Activated T-helper 1 cell treated with anti-CD3 and anti-CD28 coated beads, Interleukin-12 subunit alpha, Interleukin-12 subunit beta, Interleukin-2, Interleukin-4 antibody, amounts not matched to agents 30 ng/mL and 10 ng/mL and 1 ng/mL, durations not matched to agents 14 hours and 24 hours and 36 hours (primary cell): ENCODE measurements at regions of chr5 and their contacts with region 1.

Region 1: DNA sequence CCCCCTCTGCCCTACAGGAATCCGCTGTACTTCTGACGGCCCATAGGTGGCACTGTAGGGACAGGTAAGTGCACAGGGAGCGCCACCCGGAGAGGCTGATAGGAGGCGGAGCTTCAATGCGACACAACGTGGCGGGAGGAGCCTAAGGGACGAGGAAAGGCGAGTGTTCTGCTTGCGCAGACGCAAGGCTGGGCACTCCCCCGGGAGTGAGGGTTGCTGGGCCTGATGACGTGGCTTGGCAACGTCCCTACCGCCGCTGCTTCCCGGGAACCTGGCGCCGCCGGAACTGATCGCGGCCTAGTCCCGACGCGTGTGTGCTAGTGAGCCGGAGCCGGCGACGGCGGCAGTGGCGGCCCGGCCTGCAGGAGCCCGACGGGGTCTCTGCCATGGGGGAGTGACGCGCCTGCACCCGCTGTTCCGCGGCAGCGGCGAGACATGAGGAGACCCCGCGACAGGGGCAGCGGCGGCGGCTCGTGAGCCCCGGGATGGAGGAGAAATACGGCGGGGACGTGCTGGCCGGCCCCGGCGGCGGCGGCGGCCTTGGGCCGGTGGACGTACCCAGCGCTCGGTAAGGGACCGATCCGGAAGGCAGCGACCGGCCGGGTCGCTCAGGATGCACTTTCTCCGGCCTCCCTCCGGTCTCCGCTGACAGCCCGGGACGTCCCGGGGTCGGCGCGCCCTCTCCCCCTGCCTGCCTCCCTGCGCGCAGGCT is at the start of gene SLC30A5:
- DNase-seq: peak; percentile 99
- H3K4me3 Mint-ChIP-seq: peak within 1 kb of the TSS; percentile 97
- H3K27ac Mint-ChIP-seq: peak within 1 kb of the TSS; percentile 94
- H3K4me1 Mint-ChIP-seq: peaks cover 44% of the 10 kb centered on the region
- H3K27me3 Mint-ChIP-seq: no peaks in the 10 kb centered on the region
- total RNA-seq, gene SLC30A5: 60.8 and 67.4 TPM in 2 replicates

Region 2: GRCh38 chr5:69042915-69043658 is 50.8 kb before region 1 on chr5:
- intact Hi-C with region 1: loop called (anchors 1 kb)
- DNase-seq: peak; percentile 75
- H3K4me3 Mint-ChIP-seq: peak overlapping the region; percentile 84
- H3K27ac Mint-ChIP-seq: peak overlapping the region; percentile 56
- H3K4me1 Mint-ChIP-seq: peaks cover 5% of the 10 kb centered on the region
- H3K27me3 Mint-ChIP-seq: peaks cover 3% of the 10 kb centered on the region

Region 3: GRCh38 chr5:69189162-69190086 is 95.5 kb after region 1 on chr5 and contains the start of gene CENPH:
- intact Hi-C with region 1: loop called (anchors 1 kb)
- DNase-seq: peak; percentile 92
- H3K4me3 Mint-ChIP-seq: peak within 1 kb of the TSS; percentile 94
- H3K27ac Mint-ChIP-seq: peak within 1 kb of the TSS; percentile 98
- H3K4me1 Mint-ChIP-seq: peaks cover 16% of the 10 kb centered on the region
- H3K27me3 Mint-ChIP-seq: no peaks in the 10 kb centered on the region
- total RNA-seq, gene CENPH: 32.3 and 35.5 TPM in 2 replicates

Region 4: DNA sequence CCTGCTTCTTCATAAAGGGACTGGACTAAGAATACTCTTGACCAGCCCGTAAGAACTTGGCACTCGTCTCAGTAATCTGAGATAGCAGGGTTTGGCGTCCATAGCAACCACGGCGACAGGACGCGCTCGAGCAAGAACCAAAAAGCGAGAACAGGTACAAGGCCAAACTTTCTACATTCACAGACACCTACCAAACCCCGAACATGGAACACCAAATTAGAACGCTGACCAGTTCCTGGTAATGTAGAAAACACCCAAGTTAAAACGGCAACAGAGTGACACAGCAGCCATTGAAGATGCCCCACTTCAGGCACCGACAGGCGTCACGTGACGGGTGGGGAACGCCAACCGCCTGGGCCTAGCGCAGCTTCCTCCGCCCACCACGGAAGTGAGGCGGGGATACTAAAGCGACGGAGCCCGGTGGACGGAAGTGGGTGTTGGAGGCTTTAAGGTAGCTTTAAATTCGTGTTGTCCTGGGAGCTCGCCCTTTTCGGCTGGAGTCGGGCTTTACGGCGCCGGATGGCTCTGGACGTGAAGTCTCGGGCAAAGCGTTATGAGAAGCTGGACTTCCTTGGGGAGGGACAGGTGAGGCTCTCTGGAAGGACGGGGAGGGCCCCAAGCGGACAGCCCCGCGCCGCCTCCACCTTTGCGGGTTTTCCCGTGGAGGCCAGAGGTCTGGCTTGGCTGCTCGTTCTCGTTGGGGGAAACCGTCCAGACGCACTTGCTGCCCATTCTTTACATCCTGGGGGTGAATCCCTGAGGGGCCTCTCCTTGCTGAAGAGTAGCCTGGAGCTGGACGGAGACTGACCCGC is 140.7 kb after region 1 on chr5 and contains the start of gene CDK7:
- intact Hi-C with region 1: loop called (anchors 1 kb)
- DNase-seq: peak; percentile 92
- H3K4me3 Mint-ChIP-seq: peak within 1 kb of the TSS; percentile 97
- H3K27ac Mint-ChIP-seq: peak within 1 kb of the TSS; percentile 84
- H3K4me1 Mint-ChIP-seq: peaks cover 43% of the 10 kb centered on the region
- H3K27me3 Mint-ChIP-seq: no peaks in the 10 kb centered on the region
- total RNA-seq, gene CDK7: 42.4 and 49.2 TPM in 2 replicates

Region 5: DNA sequence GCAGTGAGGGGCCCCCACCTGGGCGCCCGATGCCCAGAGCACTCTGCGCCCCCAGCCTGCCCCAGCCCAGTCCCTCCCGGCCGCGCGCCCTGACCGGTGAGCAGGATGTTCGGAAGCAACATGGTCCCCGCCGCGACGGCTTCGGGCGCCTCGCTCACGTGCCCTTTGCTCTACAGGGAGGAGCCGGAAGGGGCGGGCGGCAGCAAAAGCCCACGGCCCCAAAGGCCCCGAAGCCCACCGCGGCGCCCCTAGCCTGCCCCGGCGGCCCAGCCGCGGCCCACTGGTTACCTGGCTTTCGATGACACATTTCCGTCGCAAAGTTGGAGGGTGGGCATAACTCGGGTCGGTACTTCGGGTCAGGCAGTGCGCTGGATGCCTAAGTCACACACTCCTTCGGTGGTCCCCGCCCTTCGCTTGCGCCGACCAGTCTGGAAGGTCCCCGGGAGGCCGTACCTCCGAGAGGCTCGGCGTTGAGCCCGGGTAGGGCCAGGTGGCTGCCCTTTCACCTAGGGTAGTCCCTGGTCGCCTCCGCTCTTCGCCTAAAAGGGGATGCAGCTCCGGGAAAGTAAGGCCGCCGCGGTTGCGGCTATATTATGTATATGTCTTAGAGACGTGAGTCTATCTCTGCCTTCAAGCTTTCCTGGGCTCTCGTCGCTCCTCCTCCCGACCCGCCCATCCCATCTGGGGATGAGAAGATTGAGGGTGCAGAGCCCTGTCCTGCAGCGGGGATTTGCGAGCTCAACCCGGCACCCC is 275.6 kb after region 1 on chr5 and contains the starts of genes AK6, RAD17 and TAF9:
- intact Hi-C with region 1: loop called (anchors 1 kb)
- DNase-seq: peak; percentile 87
- H3K4me3 Mint-ChIP-seq: peak within 1 kb of the TSS; percentile 98
- H3K27ac Mint-ChIP-seq: peak within 1 kb of the TSS; percentile 98
- H3K4me1 Mint-ChIP-seq: peaks cover 36% of the 10 kb centered on the region
- H3K27me3 Mint-ChIP-seq: no peaks in the 10 kb centered on the region
- total RNA-seq, gene AK6: 59.0 and 62.3 TPM in 2 replicates
- total RNA-seq, gene RAD17: 22.0 and 26.9 TPM in 2 replicates
- total RNA-seq, gene TAF9: 60.0 and 65.0 TPM in 2 replicates